HEK293 (cell line): ENCODE measurements at regions of chr17 and their contacts with region 1.

Region 1: GRCh38 chr17:45307290-45308015 is 9.4 kb downstream of the MAP3K14 start:
- H3K4me3 ChIP-seq: no peak overlapping the region
- H3K27ac ChIP-seq: peak overlapping the region; percentile 35; the same call in 1 of the 2 replicates
- H3K4me1 ChIP-seq: peaks cover 31% of the 10 kb centered on the region
- CTCF ChIP-seq: no peak

Region 2: DNA sequence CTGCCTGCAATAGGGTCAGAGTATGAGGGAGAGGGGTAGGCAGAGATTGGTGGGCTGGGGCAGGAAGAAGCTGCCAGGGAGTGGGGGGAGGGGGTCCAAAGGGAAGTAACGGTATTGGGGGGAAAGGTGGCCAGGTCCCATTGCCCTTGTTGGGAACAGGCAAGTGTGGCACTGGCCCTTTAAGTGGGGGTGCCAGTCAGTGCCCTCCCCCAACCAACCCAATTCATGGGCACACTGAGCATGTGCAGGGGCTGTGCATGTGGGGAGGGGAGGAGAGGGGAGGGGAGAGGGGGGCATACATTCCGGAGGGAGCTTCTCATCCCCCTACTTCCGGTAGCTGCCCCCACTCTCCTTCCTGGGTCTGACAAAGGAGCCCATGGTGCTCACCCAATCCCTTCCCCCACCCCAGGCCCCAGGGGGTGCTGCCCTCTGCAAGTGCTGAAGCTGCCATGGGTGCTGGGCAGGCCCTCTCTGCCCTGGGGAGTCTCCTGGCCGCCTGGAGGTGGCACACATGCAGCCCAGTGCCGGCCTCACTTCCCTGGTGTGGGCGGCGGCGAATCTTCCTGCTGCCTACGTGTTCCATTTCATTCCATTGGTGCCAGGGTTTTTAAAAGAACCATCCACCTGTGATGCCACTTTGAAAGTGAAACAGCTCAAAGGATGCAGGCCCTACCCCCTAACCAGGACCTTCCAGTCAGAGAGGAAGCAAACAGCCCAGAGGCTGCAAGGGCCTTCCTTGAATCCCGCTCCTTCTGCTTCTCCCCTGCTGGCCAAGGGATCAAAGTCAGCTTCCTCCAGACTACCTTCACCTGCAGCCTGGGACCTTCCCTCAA is 134.8 kb before region 1 on chr17:
- CTCF ChIA-PET with region 1: no interaction called
- POLR2A ChIA-PET with region 1: no interaction called
- H3K4me3 ChIP-seq: no peak overlapping the region
- H3K27ac ChIP-seq: peak overlapping the region; percentile 34
- H3K4me1 ChIP-seq: peaks cover 23% of the 10 kb centered on the region
- CTCF ChIP-seq: 0 out of 2 replicates have a peak, but pooled peaks have one; percentile 41

Region 3: GRCh38 chr17:45284176-45285140 is 23.0 kb before region 1 on chr17:
- CTCF ChIA-PET with region 1: interaction called, 61 read pairs
- POLR2A ChIA-PET with region 1: interaction called, 3 read pairs
- H3K4me3 ChIP-seq: no peak overlapping the region
- H3K27ac ChIP-seq: no peak overlapping the region
- H3K4me1 ChIP-seq: no peaks in the 10 kb centered on the region
- CTCF ChIP-seq: peak; percentile 58; the same call in 1 of the 2 replicates

Region 4: DNA sequence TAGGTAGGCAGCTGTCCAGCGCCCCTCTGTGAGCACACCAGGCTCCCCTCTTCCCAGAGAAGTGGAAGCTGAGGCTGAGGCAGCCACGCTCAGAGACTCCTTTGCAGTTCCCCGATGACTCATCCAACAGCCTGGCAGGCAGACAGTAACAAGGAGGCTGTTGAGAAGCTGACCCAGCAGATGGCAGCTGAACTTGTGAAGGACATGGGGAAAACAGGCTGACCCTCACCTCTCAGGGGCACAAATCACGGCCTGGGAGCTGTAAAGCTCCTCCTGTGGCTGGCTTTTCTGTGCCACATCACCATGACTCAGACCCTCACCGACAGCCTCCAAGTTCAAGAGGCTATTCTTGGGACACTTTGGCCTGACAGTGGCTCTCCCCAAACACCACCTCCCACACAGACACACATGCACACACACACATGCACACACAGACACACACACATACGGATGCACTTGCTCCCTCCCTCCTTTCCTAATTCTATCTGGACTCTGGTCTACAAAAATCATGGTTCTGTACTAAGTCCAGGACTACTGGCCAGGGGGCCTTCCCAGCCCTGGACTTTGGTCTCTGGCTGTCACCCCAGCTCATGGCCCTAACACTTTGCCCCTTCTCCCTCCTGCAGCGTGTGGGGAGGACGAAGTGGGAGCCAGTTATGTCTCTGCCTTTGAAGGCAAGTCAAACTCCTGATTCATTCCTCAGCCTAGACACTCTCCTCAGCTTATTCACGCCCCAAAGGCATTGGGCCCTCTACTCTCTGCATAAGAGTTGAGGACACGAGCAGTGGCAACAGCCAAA is 13.8 kb before region 1 on chr17:
- CTCF ChIA-PET with region 1: interaction called, 15 read pairs
- POLR2A ChIA-PET with region 1: interaction called, 7 read pairs
- H3K4me3 ChIP-seq: no peak overlapping the region
- H3K27ac ChIP-seq: no peak overlapping the region
- H3K4me1 ChIP-seq: peaks cover 12% of the 10 kb centered on the region
- CTCF ChIP-seq: peak; percentile 27; the same call in 1 of the 2 replicates

Region 5: GRCh38 chr17:45371414-45372327 is 64.2 kb after region 1 on chr17:
- CTCF ChIA-PET with region 1: interaction called, 26 read pairs
- POLR2A ChIA-PET with region 1: interaction called, 4 read pairs
- H3K4me3 ChIP-seq: peak overlapping the region; percentile 21
- H3K27ac ChIP-seq: peak overlapping the region; percentile 55
- H3K4me1 ChIP-seq: 0 out of 2 replicates have a peak, but pooled peaks cover 7% of the 10 kb centered on the region
- CTCF ChIP-seq: peak; percentile 58; the same call in 1 of the 2 replicates

Region 6: DNA sequence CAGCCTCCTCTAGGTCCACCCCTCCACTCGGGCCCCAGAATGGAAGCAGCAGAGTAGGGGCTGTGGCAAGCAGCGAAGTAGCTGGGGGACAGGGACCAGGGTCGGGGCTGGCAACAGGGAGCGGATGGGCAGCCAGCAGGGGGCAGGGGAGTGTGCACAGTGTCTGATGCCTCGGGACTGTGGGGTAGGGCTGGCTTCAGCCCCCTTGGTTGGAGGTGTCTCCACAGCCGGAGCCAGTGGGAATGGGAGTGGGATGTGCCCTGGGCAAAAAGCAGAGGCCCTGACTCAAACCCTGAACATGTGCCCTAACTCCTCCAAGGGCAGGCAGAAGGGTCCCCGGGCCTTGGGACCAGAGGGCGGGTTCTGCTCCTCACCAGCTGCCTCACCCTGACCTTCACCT is 143.7 kb after region 1 on chr17:
- CTCF ChIA-PET with region 1: no interaction called
- POLR2A ChIA-PET with region 1: no interaction called
- H3K4me3 ChIP-seq: no peak overlapping the region
- H3K27ac ChIP-seq: no peak overlapping the region
- H3K4me1 ChIP-seq: no peaks in the 10 kb centered on the region
- CTCF ChIP-seq: no peak